ENCODE measurements at regions of chr16 and their contacts with region 1.

Region 1: GRCh38 chr16:71461686-71462648 is at the start of gene ZNF23:
- DNase-seq: peak; percentile 83 to 92
- ATAC-seq: peak; percentile 100
- H3K4me3 ChIP-seq: peak within 1 kb of the TSS; percentile 98
- H3K27ac ChIP-seq: peak within 1 kb of the TSS; percentile 89
- H3K4me1 ChIP-seq: peaks cover 12% of the 10 kb centered on the region
- H3K27me3 ChIP-seq: no peaks in the 10 kb centered on the region
- CTCF ChIP-seq: peak; percentile 5
- total RNA-seq, gene ZNF23: 3.8 to 7.2 (median 5.4) TPM

Region 2: DNA sequence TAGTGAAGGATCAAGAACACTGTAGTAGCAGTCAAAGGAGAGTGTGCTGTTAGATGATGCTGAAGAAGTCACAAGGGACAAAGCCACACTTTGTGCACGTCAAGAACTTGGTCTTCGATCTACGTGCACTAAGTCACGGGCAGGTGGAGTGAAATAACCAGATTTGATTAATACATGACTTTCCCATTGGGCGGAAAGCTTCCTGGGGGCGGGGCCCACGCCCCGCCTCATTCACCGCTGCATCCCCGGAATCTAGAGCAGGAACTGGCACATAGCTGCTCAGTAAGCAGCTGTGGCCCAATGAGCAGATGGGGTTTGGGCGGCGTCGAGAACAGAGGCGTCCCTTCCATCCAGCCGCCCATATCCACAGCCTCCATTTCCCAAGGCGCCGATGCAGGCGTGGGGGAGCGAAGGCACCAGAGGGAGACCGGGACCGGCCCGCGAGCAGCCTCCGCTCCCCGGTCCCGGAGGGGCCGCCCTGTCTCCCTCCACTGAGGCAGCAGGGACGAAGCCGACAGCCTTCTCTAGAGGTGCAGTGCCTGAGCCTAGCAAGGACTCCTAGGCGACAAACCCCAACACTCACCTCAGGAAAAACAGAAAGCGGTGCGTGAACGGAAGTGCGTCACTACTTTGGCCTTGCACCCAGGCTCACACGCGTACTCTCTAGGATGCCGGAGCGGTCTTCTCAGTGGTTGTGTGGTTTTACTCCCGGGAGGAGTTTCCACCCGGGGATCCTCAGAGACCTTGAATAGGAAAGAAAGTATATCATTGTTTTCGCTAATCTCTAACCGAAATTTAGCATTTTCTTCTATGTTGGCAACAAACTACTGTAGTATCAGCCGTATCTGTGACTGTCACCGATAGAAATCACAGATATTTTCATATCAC is 22.3 kb after region 1 on chr16:
- intact Hi-C with region 1: loop called (anchors 1 kb)
- DNase-seq: peak; percentile 83 to 91
- ATAC-seq: peak; percentile 98 to 100 (median 98)
- H3K4me3 ChIP-seq: peak overlapping the region; percentile 83
- H3K27ac ChIP-seq: peak overlapping the region; percentile 92
- H3K4me1 ChIP-seq: peaks cover 6% of the 10 kb centered on the region
- H3K27me3 ChIP-seq: no peaks in the 10 kb centered on the region
- CTCF ChIP-seq: no peak

Region 3: GRCh38 chr16:71585318-71585703 is 123.3 kb after region 1 on chr16:
- intact Hi-C with region 1: no loop called
- DNase-seq: no peak
- ATAC-seq: no peak
- H3K4me3 ChIP-seq: no peak overlapping the region
- H3K27ac ChIP-seq: no peak overlapping the region
- H3K4me1 ChIP-seq: no peaks in the 10 kb centered on the region
- H3K27me3 ChIP-seq: peaks cover 0 to 4% (median 0%) of the 10 kb centered on the region in 3 donors
- CTCF ChIP-seq: no peak